Colonic mucosa (tissue), 4 donors: ENCODE measurements at regions of chr3 and their contacts with region 1.

Region 1: DNA sequence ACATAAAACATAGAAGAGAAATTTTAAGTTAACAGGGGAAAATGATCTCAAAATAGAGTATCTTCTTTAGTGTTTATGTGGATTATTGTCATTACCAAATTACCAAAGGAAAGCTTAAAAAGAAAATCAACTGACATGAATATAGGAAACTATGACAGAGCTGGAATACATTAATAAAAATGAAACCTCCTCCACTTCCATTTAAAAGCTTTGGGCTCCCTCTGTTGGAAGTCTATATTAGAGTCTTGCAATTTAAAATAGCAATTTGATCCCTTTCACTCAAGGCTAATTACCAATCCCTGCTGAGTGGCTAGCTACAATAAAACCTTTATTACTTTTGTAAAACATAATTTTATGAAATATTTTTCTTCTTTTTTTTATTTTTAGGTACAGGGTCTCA is 61.4 kb upstream of the IMPG2 start:
- DNase-seq: no peak
- H3K4me3 ChIP-seq: no peak overlapping the region
- H3K27ac ChIP-seq: no peak overlapping the region
- H3K4me1 ChIP-seq: no peaks in the 10 kb centered on the region
- H3K27me3 ChIP-seq: no peaks in the 10 kb centered on the region
- CTCF ChIP-seq: peak; percentile 46

Region 2: GRCh38 chr3:99981138-99981537 is 1400.7 kb before region 1 on chr3:
- intact Hi-C with region 1: no loop called
- DNase-seq: no peak
- H3K4me3 ChIP-seq: no peak overlapping the region
- H3K27ac ChIP-seq: no peak overlapping the region
- H3K4me1 ChIP-seq: no peaks in the 10 kb centered on the region
- H3K27me3 ChIP-seq: no peaks in the 10 kb centered on the region
- CTCF ChIP-seq: no peak

Region 3: DNA sequence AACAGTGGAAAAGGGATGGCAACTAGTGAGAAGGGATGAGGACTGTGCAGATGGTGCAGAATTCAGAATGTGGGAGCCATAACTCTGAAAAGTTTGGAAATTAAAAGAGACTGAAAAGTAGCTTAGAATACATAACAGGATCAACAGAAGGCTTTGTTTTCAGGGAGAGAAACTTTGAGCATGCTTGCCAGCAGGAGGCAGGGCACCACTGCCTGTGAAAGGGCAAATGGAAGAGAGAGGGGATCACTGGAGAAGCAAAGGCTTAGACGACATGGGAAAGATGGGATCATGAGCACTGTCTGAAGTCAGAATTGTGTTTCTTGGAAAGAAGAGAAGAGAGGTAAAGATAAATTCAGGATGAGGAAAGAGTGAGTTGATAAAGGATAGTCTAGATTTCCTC is 488.2 kb before region 1 on chr3:
- intact Hi-C with region 1: loop called (anchors 5 kb)
- DNase-seq: no peak
- H3K4me3 ChIP-seq: no peak overlapping the region
- H3K27ac ChIP-seq: no peak overlapping the region
- H3K4me1 ChIP-seq: no peaks in the 10 kb centered on the region
- H3K27me3 ChIP-seq: no peaks in the 10 kb centered on the region
- CTCF ChIP-seq: no peak

Region 4: DNA sequence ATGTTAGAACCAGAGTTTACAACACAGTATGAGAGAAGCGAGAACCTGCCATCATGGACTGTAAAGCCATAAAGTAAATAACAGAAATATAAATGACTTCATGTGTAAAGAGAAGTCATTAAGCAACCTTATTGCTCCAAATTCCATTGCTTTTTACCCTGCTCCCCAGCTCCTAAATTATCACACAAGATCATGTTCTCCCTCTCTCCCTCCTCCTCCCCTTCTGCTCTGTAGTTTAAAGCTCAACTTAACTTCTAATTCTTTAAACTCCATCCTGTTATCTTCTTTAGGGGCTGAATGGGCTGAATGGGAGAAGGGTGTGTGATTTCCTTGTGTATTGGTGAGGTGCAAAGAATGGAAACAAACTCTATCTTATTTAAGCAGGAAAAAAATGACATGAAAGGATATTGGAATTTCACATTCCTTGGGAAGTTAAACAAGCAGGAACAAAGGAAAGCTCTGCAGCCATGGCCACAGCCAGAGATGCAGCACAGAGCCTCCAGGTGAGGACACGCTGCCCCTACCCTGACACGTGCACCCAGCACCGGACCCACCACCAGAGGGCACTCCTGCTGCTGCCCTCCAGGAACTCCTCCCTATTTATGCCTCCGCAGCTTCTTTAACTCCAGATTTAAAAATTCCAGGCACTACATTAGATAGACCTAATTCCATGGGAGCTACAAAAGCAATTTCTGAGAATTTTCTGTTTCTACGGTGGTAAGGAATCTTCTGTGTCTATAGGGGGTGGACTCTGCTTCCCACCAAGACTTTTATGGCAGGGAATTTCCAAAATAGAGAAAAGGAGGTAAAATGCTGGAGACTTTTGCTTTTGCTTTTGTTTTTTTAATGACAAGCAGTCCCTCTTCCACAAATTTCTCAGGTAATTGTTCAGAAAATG is 311.7 kb before region 1 on chr3:
- intact Hi-C with region 1: loop called (anchors 5 kb)
- DNase-seq: peak; percentile 82
- H3K4me3 ChIP-seq: no peak overlapping the region
- H3K27ac ChIP-seq: peak overlapping the region; percentile 52
- H3K4me1 ChIP-seq: no peaks in the 10 kb centered on the region
- H3K27me3 ChIP-seq: no peaks in the 10 kb centered on the region
- CTCF ChIP-seq: peak; percentile 84

Region 5: DNA sequence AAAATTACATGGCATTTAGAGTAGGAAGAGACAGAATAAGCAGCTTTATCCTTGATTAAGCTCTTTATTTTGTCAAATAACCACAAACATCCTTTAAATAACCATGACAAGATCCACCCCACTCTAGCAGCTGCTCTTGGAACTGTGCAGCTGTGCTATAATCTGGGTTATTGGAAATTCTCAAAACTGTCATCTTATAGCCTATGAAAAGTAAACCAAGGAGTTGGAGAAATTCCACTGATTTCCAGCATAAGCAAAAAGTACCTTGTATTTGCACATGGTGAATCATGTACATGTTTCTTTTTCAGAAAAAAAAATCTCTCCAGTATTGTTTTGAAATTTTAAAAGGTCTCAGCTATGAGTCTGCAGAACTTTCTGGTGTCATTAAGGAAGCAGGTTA is 299.8 kb before region 1 on chr3:
- intact Hi-C with region 1: no loop called
- DNase-seq: no peak
- H3K4me3 ChIP-seq: no peak overlapping the region
- H3K27ac ChIP-seq: no peak overlapping the region
- H3K4me1 ChIP-seq: no peaks in the 10 kb centered on the region
- H3K27me3 ChIP-seq: no peaks in the 10 kb centered on the region
- CTCF ChIP-seq: no peak

Region 6: DNA sequence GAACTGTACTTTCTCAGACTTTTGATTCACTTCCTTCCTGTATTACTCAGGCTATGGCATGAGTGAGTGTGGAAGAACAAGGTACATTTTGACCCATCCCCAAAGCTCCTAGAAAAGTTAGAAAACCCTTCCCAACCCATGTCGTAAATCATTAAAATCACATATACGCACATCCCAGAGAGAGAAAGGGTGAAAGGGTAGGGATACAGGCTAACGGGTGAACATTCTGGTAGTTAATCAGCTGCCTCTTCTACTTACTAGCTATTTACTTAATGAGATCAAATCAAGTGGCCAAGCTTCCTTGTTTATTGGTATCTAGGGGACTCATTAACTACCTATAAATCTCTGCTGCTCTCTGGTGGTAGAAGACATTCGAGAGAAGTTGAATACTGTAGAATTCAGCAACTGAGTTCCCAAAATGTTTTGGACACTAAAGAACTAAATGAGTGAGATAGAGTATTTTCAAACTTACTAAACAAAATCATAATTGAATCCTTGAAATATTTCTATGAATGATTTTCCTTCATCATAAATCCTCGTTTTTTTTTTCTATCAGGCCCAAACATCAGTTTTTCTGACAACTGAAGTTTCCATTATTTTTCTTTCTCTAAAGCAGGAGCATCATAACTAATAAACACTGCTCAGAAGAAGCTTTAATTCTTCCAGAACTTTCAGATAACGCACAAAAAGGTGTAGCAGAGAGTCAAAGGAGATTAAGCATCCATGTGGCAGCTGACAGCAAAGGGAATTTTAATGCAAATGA is 185.7 kb before region 1 on chr3:
- intact Hi-C with region 1: loop called (anchors 10 kb)
- DNase-seq: no peak
- H3K4me3 ChIP-seq: no peak overlapping the region
- H3K27ac ChIP-seq: no peak overlapping the region
- H3K4me1 ChIP-seq: no peaks in the 10 kb centered on the region
- H3K27me3 ChIP-seq: no peaks in the 10 kb centered on the region
- CTCF ChIP-seq: peak; percentile 45

Region 7: GRCh38 chr3:101229681-101230080 is 152.1 kb before region 1 on chr3:
- intact Hi-C with region 1: loop called (anchors 10 kb)
- DNase-seq: no peak
- H3K4me3 ChIP-seq: no peak overlapping the region
- H3K27ac ChIP-seq: no peak overlapping the region
- H3K4me1 ChIP-seq: no peaks in the 10 kb centered on the region
- H3K27me3 ChIP-seq: no peaks in the 10 kb centered on the region
- CTCF ChIP-seq: no peak

Region 8: DNA sequence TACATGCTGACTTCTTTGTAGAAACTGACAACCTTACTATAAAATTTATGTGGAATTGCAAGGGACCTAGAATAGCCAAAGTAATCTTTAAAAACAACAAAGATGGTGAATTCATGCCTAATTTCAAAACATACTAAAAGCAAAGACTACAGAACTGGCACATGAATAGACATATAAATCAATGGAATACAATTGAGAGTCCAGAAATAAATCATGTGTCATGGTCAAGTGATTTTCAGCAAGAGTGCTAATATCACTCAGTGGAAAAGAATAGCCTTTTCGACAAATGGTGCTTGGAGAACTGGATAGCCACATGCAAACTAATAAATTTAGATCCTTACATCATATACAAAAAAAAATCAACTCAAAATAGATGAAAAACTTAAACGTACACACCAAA is 70.1 kb before region 1 on chr3:
- intact Hi-C with region 1: loop called (anchors 10 kb)
- DNase-seq: no peak
- H3K4me3 ChIP-seq: no peak overlapping the region
- H3K27ac ChIP-seq: no peak overlapping the region
- H3K4me1 ChIP-seq: peaks cover 6% of the 10 kb centered on the region
- H3K27me3 ChIP-seq: no peaks in the 10 kb centered on the region
- CTCF ChIP-seq: no peak